B cell (primary cell): ENCODE measurements at regions of chr1 and their contacts with region 1.

Region 1: DNA sequence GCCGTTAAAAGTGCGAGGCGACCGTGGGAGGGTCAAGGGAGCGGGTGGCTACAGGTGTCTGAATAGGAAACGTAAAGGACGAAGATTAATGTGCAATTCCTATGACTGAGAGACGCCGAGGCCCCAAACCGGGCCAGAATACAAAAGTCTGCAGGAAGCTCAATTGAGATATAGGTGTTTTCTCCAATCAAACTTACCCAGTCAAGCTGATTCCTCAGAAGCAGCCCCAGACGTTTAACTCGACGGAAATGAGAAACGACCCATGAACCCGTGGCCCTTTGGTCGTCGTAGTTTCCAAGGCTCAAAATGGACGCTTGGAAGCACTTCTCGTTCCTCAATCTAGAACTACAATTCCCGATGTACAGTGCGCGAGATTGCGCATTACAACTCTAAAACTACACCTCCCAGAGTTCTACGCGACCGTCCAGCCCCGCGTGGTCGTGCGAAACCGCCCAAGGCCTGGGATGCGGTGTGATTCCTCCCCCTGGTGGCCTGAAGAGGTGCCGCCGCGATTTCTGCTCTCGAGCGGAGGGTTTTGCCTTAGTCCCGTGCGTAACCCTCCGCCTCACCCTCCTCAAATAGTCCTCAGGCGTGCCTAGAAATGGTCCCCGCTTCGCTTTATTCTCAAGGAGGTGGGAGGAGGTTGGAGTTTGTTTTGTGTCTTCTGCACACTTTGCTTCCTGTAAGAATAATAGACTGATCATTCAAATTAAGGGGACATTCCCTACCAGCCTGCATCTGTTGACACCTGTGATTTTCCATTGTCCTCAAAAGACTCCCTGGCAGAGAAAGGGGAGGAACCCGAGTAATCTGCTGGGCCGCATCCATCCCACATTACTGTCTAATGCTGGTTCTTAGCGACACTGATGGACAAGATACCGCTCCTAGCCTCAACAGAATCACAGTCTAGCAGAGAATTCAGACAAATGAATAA is at the start of gene PAFAH2:
- DNase-seq: peak; percentile 99
- ATAC-seq: peak; percentile 98
- H3K4me3 ChIP-seq: peak within 1 kb of the TSS; percentile 65 to 90 (median 83)
- H3K4me3 Mint-ChIP-seq: peak within 1 kb of the TSS; percentile 95
- H3K27ac ChIP-seq: peak within 1 kb of the TSS; percentile 77 to 91
- H3K27ac Mint-ChIP-seq: peak within 1 kb of the TSS; percentile 93
- H3K4me1 ChIP-seq: peaks cover 13 to 17% of the 10 kb centered on the region in 2 donors
- H3K4me1 Mint-ChIP-seq: peaks cover 20% of the 10 kb centered on the region
- H3K27me3 ChIP-seq: no peaks in the 10 kb centered on the region
- H3K27me3 Mint-ChIP-seq: no peaks in the 10 kb centered on the region
- CTCF ChIP-seq: peak; percentile 87
- total RNA-seq, gene PAFAH2: 8.8 and 10.8 TPM in 2 replicates

Region 2: DNA sequence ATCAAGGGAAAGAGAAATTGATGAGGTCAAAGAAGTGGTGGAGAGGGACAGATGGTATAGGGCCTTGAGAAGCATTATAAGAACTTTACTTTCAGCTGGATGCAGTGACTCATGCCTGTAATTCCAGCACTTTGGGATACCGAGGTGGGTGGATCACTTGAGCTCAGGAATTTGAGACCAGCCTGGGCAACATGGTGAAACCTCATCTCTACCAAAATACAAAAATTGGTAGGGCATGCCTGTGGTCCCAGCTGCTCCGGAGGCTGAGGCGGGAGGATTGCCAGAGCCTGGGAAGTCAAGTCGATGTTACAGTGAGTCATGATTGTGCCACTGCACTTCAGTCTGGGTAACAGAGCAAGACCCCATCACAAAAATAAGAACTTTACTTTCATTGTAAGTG is 654.2 kb before region 1 on chr1:
- CTCF ChIA-PET with region 1: no interaction called
- POLR2A ChIA-PET with region 1: no interaction called
- intact Hi-C with region 1: no loop called
- DNase-seq: peak; percentile 2
- ATAC-seq: no peak
- H3K4me3 ChIP-seq: no peak overlapping the region
- H3K4me3 Mint-ChIP-seq: no peak overlapping the region
- H3K27ac ChIP-seq: no peak overlapping the region
- H3K27ac Mint-ChIP-seq: no peak overlapping the region
- H3K4me1 ChIP-seq: peaks cover 10 to 14% of the 10 kb centered on the region in 2 donors
- H3K4me1 Mint-ChIP-seq: peaks cover 11% of the 10 kb centered on the region
- H3K27me3 ChIP-seq: no peaks in the 10 kb centered on the region
- H3K27me3 Mint-ChIP-seq: no peaks in the 10 kb centered on the region
- CTCF ChIP-seq: no peak

Region 3: DNA sequence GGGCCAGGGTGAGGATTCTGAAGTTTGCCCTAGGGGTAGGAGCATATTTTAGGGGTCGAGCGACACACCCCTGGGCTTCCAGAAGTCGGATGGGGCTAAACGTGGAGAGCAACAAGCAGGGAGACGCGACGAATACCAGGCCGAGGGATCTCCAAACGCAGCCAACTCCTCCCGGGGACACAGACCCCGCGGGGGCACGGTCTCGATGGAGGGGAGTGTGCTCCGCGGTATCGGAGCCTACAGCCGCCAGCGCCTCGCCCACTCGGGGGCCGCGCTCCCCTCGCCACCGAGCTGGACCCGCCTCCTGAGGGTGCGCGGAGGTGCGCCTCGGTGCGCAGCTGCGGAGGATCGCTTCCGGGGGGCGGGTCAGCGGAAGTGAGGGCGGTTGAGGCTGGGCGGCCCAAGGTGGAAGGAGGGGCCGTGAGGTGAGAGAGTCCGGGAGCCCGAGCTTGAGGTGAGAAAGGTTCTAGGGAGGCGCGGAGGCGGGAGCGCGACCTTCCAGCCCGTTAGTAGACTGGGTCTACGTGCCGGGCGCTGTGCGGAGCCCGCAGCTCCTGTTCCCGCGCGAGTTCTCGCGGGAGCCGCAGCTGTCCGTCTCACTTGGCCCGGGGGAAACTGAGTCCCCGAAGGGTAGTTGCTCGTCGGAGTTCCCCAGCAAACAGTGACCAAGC is 178.4 kb before region 1 on chr1 and contains the start of gene MTFR1L:
- CTCF ChIA-PET with region 1: no interaction called
- POLR2A ChIA-PET with region 1: no interaction called
- intact Hi-C with region 1: loop called (anchors 1 kb)
- DNase-seq: peak; percentile 94
- ATAC-seq: peak; percentile 93
- H3K4me3 ChIP-seq: peak within 1 kb of the TSS; percentile 66 to 99 (median 84)
- H3K4me3 Mint-ChIP-seq: peak within 1 kb of the TSS; percentile 95
- H3K27ac ChIP-seq: peak within 1 kb of the TSS; percentile 76 to 84
- H3K27ac Mint-ChIP-seq: peak within 1 kb of the TSS; percentile 94
- H3K4me1 ChIP-seq: peaks cover 18 to 24% of the 10 kb centered on the region in 2 donors
- H3K4me1 Mint-ChIP-seq: peaks cover 29% of the 10 kb centered on the region
- H3K27me3 ChIP-seq: no peaks in the 10 kb centered on the region
- H3K27me3 Mint-ChIP-seq: no peaks in the 10 kb centered on the region
- CTCF ChIP-seq: no peak
- total RNA-seq, gene MTFR1L: 40.9 and 41.5 TPM in 2 replicates

Region 4: DNA sequence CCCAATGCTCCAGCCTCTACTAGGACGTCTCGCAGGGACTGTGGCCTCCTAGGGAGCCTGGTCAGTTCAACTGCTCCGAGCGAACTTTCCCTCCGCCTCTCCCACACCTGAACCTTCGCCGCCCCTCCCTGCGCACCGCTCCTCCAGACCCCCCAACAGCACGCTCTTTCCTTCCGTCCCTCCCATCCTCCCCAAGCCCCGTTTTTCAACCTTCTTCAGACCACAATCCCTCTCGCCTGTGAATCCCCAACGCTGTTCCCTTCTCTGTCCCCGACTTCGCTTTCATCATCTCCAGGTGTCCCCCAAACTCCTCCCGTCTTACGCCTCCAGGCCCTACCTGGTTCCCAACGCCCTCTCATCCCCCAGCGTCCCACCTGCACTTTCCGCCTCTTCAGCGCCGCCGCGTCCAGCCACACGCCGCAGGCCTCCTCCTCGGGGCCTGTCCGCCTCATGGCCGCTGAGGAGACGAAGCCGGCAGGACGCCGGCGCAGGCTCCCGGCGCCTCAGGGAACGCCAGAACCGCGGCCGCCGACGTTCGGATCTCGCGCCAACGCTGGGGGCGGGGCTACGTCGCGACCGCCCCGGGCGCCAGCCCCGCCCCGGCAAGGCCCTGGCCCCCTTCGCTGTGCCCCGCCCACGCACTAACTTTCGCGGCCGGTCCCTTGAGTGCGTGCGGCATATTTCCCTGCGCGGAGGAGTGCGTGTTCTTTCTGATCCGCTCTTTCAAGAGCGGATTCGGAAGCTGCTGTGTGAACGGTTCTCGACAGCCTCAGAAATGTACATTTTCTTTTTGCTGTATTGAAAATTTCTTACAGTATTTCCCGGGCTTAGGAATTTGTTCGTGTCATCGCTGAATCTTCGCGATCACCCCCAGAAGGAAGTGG is 138.9 kb before region 1 on chr1 and contains the start of gene AUNIP:
- CTCF ChIA-PET with region 1: no interaction called
- POLR2A ChIA-PET with region 1: no interaction called
- intact Hi-C with region 1: loop called (anchors 1 kb)
- DNase-seq: peak; percentile 93
- ATAC-seq: peak; percentile 99
- H3K4me3 ChIP-seq: peak within 1 kb of the TSS; percentile 65 to 91 (median 77)
- H3K4me3 Mint-ChIP-seq: peak within 1 kb of the TSS; percentile 96
- H3K27ac ChIP-seq: peak within 1 kb of the TSS; percentile 76 to 86
- H3K27ac Mint-ChIP-seq: peak within 1 kb of the TSS; percentile 95
- H3K4me1 ChIP-seq: peaks cover 22 to 30% of the 10 kb centered on the region in 2 donors
- H3K4me1 Mint-ChIP-seq: peaks cover 26% of the 10 kb centered on the region
- H3K27me3 ChIP-seq: no peaks in the 10 kb centered on the region
- H3K27me3 Mint-ChIP-seq: no peaks in the 10 kb centered on the region
- CTCF ChIP-seq: no peak
- total RNA-seq, gene AUNIP: 0.27 TPM in 1 of 2 replicates, not detected in the other

Region 5: DNA sequence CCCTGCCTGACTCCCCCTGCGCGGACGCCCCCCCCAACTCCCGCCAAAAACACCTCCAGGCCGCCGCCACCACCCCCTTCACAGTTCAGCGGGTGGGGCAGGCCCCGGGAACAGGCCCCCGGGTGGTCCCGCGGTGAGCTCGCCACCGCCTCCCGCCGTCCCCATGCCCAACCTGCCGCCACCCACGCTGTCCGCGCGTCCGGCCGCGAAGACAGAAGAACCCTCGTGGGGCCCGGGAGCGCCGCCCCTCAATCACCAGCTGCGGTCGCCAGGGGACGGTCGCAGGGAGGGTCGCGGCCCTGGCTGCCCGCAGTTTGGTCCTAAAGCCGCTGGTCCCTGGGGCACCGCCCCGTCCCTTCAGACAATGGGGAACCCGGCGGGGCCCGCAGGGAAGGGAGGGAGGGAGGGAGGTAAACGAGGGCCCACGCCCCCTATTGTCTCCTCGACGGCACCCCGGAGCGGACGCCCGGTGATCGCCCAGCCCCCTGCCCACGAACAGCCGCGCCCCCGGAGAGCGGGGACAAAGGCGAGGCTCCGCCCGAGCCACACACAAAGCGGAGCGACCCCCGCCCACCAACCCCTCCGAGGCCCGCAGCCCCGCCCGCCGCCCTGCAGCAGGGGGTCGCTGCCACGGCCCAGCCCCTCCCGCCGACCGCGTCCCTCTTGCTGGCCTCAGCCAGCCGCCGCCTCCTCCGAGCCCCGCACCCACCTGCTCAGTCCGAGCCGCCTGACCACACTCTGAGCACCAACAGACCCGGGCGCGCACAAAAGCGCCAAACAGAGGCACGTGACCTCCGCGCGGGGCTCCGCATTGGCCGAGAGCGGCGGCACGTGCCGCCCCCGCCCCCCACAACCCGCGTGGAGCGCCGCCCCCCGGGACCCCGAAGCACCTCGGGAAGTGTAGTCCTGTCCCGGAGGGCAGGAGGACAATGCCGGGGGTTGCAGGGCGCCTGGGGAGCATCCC is 92.1 kb before region 1 on chr1 and contains the start of gene STMN1:
- CTCF ChIA-PET with region 1: interaction called, 20 read pairs
- POLR2A ChIA-PET with region 1: no interaction called
- intact Hi-C with region 1: loop called (anchors 1 kb)
- DNase-seq: peak; percentile 93
- ATAC-seq: peak; percentile 75
- H3K4me3 ChIP-seq: peak within 1 kb of the TSS; percentile 62 to 99 (median 63)
- H3K4me3 Mint-ChIP-seq: peak within 1 kb of the TSS; percentile 88
- H3K27ac ChIP-seq: peak within 1 kb of the TSS; percentile 62 to 65
- H3K27ac Mint-ChIP-seq: peak within 1 kb of the TSS; percentile 94
- H3K4me1 ChIP-seq: peaks cover 6 to 22% of the 10 kb centered on the region in 2 donors
- H3K4me1 Mint-ChIP-seq: peaks cover 14% of the 10 kb centered on the region
- H3K27me3 ChIP-seq: no peaks in the 10 kb centered on the region
- H3K27me3 Mint-ChIP-seq: no peaks in the 10 kb centered on the region
- CTCF ChIP-seq: no peak
- total RNA-seq, gene STMN1: 42.2 and 48.0 TPM in 2 replicates

Region 6: DNA sequence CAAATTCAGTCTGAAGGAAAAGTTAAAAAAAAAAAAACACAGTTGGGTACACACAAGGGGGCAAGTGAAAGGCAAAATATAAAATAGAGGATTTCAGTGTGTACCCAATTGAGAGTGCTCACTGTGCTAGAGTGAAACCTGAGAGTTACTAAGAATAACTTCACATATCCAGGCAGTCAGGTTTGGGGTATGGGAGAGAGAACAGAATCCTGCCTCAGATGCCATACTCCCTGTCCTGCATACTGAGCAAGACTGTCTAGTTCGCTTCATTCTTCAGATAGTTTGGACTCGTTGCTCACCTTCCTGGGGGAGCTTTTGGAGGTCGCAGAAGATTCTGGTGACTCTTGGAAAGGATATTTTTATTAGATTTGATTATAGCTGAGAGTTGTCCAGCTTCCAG is 256.3 kb after region 1 on chr1:
- CTCF ChIA-PET with region 1: no interaction called
- POLR2A ChIA-PET with region 1: no interaction called
- intact Hi-C with region 1: no loop called
- DNase-seq: no peak
- ATAC-seq: no peak
- H3K4me3 ChIP-seq: no peak overlapping the region
- H3K4me3 Mint-ChIP-seq: no peak overlapping the region
- H3K27ac ChIP-seq: no peak overlapping the region
- H3K27ac Mint-ChIP-seq: no peak overlapping the region
- H3K4me1 ChIP-seq: peaks cover 4 to 12% of the 10 kb centered on the region in 2 donors
- H3K4me1 Mint-ChIP-seq: peaks cover 19% of the 10 kb centered on the region
- H3K27me3 ChIP-seq: no peaks in the 10 kb centered on the region
- H3K27me3 Mint-ChIP-seq: no peaks in the 10 kb centered on the region
- CTCF ChIP-seq: no peak

Region 7: DNA sequence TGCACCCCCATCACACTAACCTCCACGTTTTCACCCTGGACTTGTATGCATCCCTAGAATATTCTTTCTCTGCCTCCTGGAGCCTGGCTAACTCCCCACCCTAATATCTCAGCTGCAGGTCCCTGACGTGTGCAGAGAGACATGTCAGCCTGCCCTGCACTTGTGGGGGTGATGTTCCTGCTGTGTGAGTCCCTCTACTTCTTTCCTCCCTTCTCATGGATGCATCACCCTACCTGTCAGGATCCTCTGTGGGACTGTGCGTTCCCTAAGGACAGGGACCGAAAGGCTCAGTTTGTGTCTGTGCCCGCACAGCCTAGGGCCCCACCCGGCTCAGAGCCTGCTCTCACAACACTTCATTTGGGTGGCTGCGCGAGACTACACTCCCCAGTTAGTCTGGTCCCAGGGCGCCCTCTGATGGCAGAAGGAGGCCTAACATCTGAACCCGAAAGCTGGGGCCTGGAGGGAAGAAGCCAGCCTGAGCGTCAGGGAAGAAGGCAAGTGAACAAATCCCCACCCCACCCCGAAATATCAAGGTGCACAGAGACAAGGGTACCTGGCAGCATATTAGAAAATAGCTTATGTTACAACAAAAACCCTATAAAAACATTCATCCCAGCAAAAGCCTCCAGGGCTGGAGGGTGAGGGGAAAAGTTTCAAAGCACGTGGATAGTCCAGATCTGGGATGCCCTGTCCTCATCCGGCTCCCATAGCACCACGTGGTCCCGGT is 323.4 kb after region 1 on chr1:
- CTCF ChIA-PET with region 1: no interaction called
- POLR2A ChIA-PET with region 1: no interaction called
- intact Hi-C with region 1: no loop called
- DNase-seq: peak; percentile 93
- ATAC-seq: peak; percentile 66
- H3K4me3 ChIP-seq: peak overlapping the region in 4 of 5 experiments; percentile 90 to 95 (median 94)
- H3K4me3 Mint-ChIP-seq: peak overlapping the region; percentile 89
- H3K27ac ChIP-seq: peak overlapping the region in 1 of 2 donors; percentile 75
- H3K27ac Mint-ChIP-seq: peak overlapping the region; percentile 99
- H3K4me1 ChIP-seq: peaks cover 43% of the 10 kb centered on the region in 2 donors
- H3K4me1 Mint-ChIP-seq: peaks cover 57% of the 10 kb centered on the region
- H3K27me3 ChIP-seq: no peaks in the 10 kb centered on the region
- H3K27me3 Mint-ChIP-seq: no peaks in the 10 kb centered on the region
- CTCF ChIP-seq: peak; percentile 92

Region 8: GRCh38 chr1:26431979-26432695 is 434.0 kb after region 1 on chr1 and contains the start of gene DHDDS:
- CTCF ChIA-PET with region 1: no interaction called
- POLR2A ChIA-PET with region 1: no interaction called
- intact Hi-C with region 1: loop called (anchors 1 kb)
- DNase-seq: peak; percentile 99
- ATAC-seq: peak; percentile 97
- H3K4me3 ChIP-seq: peak within 1 kb of the TSS; percentile 62 to 97 (median 77)
- H3K4me3 Mint-ChIP-seq: peak within 1 kb of the TSS; percentile 95
- H3K27ac ChIP-seq: peak within 1 kb of the TSS; percentile 61 to 86
- H3K27ac Mint-ChIP-seq: peak within 1 kb of the TSS; percentile 93
- H3K4me1 ChIP-seq: peaks cover 15 to 21% of the 10 kb centered on the region in 2 donors
- H3K4me1 Mint-ChIP-seq: peaks cover 20% of the 10 kb centered on the region
- H3K27me3 ChIP-seq: no peaks in the 10 kb centered on the region
- H3K27me3 Mint-ChIP-seq: no peaks in the 10 kb centered on the region
- CTCF ChIP-seq: no peak
- total RNA-seq, gene DHDDS: 54.2 and 61.7 TPM in 2 replicates